Heart right ventricle (tissue), 16 donors: ENCODE measurements at regions of chr6 and their contacts with region 1.

Region 1: DNA sequence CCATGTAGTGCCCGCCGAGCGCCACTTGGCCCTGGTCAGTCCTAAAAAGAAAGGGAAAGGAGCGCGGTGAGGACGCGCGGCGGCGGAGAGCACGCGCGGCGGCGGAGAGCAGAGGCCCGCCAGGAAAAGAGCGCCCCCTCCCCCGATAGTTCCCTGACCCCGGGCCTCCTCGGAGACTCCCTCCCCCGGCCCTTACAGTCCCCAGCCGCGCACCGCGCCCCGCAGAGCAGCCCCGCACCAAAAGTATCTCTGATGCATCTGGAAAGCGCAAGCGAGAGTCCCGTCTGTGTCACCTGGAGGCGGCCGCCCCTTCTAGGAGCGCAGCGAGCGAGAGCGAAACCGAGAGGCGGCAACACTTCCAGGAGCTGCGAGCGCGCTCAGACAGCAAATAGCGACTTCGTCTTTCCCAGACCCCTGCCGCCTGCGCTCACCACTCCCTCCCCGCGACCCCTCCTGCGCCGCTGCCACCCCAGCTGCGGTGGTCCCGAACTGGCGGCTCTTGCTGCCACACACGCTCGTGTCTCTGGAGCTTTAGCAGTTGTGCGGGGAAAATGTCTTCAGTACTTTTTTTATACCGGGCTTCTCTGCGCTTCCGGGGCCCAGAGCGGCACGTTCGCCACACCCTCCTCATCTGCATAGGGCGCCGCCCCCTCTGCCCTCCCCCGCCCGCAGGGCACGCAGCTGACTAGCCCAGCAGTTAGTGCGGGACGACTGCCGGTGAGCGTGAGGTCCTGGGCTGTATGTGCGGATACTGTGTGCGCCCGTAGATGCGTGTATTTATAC is at the start of gene TENT5A:
- DNase-seq: peak; percentile 91 to 93
- ATAC-seq: peak; percentile 84 to 93 (median 88)
- H3K4me3 ChIP-seq: peak within 1 kb of the TSS; percentile 73 to 96 (median 82)
- H3K27ac ChIP-seq: peak within 1 kb of the TSS; percentile 87 to 99 (median 96)
- H3K4me1 ChIP-seq: peaks cover 1 to 45% (median 20%) of the 10 kb centered on the region in 9 donors
- H3K27me3 ChIP-seq: no peaks in the 10 kb centered on the region
- CTCF ChIP-seq: peak in 4 of 9 donors; percentile 13 to 33 (median 28)
- total RNA-seq, gene TENT5A: 37.0 to 72.1 (median 46.9) TPM

Region 2: GRCh38 chr6:80214436-80215022 is 1537.8 kb before region 1 on chr6:
- intact Hi-C with region 1: loop called in 2 of 10 experiments (anchors 10 kb)
- DNase-seq: peak in 1 of 2 donors; percentile 37
- ATAC-seq: peak; percentile 69 to 85 (median 77)
- H3K4me3 ChIP-seq: no peak overlapping the region
- H3K27ac ChIP-seq: peak overlapping the region in 1 of 10 donors; percentile 22
- H3K4me1 ChIP-seq: peaks cover 0 to 19% (median 11%) of the 10 kb centered on the region in 9 donors
- H3K27me3 ChIP-seq: no peaks in the 10 kb centered on the region
- CTCF ChIP-seq: peak; percentile 43 to 85 (median 72)

Region 3: GRCh38 chr6:81241126-81242041 is 510.9 kb before region 1 on chr6:
- intact Hi-C with region 1: loop called in 6 of 10 experiments (anchors 5 to 10 kb)
- DNase-seq: no peak
- ATAC-seq: no peak
- H3K4me3 ChIP-seq: no peak overlapping the region
- H3K27ac ChIP-seq: no peak overlapping the region
- H3K4me1 ChIP-seq: no peaks in the 10 kb centered on the region
- H3K27me3 ChIP-seq: no peaks in the 10 kb centered on the region
- CTCF ChIP-seq: peak in 8 of 9 donors; percentile 13 to 65 (median 48)

Region 4: GRCh38 chr6:81562169-81562568 is 190.2 kb before region 1 on chr6:
- intact Hi-C with region 1: no loop called
- DNase-seq: no peak
- ATAC-seq: peak in 6 of 8 donors; percentile 58 to 83 (median 66)
- H3K4me3 ChIP-seq: peak overlapping the region in 4 of 10 donors; percentile 10 to 23 (median 15)
- H3K27ac ChIP-seq: peak overlapping the region in 5 of 10 donors; percentile 16 to 57 (median 33)
- H3K4me1 ChIP-seq: peaks cover 0 to 19% (median 9%) of the 10 kb centered on the region in 9 donors
- H3K27me3 ChIP-seq: no peaks in the 10 kb centered on the region
- CTCF ChIP-seq: no peak

Region 5: GRCh38 chr6:81614292-81614691 is 138.0 kb before region 1 on chr6:
- intact Hi-C with region 1: loop called in 1 of 10 experiments (anchors 5 kb)
- DNase-seq: peak in 1 of 2 donors; percentile 9
- ATAC-seq: peak in 5 of 8 donors; percentile 35 to 89 (median 74)
- H3K4me3 ChIP-seq: no peak overlapping the region
- H3K27ac ChIP-seq: peak overlapping the region in 6 of 10 donors; percentile 31 to 77 (median 53)
- H3K4me1 ChIP-seq: peaks cover 0 to 17% (median 9%) of the 10 kb centered on the region in 9 donors
- H3K27me3 ChIP-seq: no peaks in the 10 kb centered on the region
- CTCF ChIP-seq: no peak

Region 6: DNA sequence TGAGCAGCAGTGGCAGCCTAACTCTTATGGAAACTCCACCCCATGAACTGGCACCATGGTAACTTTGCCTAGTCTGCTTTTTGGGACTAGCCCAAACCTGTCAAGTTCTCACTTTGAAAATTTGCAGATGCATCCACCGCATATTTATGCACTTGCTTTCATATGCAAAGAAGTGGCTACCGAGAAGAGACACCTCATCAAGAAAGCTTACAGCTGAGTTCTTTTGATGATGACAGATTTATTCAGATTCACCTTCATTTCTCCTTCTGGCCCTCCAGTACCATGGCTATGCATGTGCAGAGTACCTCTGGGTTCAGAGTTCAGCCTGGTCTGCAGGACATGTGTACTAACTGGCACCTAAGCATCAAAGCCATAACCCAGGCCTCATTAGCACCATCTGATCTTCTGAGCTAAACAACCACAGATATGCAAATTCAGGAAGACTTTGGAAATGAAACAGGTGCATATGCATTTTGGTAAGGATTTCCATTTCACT is 154.4 kb after region 1 on chr6:
- intact Hi-C with region 1: loop called in 4 of 10 experiments (anchors 2 to 10 kb)
- DNase-seq: peak in 1 of 2 donors; percentile 37
- ATAC-seq: peak in 7 of 8 donors; percentile 49 to 76 (median 71)
- H3K4me3 ChIP-seq: no peak overlapping the region
- H3K27ac ChIP-seq: peak overlapping the region in 8 of 10 donors; percentile 4 to 71 (median 50)
- H3K4me1 ChIP-seq: peaks cover 0 to 32% (median 7%) of the 10 kb centered on the region in 9 donors
- H3K27me3 ChIP-seq: no peaks in the 10 kb centered on the region
- CTCF ChIP-seq: no peak

Region 7: DNA sequence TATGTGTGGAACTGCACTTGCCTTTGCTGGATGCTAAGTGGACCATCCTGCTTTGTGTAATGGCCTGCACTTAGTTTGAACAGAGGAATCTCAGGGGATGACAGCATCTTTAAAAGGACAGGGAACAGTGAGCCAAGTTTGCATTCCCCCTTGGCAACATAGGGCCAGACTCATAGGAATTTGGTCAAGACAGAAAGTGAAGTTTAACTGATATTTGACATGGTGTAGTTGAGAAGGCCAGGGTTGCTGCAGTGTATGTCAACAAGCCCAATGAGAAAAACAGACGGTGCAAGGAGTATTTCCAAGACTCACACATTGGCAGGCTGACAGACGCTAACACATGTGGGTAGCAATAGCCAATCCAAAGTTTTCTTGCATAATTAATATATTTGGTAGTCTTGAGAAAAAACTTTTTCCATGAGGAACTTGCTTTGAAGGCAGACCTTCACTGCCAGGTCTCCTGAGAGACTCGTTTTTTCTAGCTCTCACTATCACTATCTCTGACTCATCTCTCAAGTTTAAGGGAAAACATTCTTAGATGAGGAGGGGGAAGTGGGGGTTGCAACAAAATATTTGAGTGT is 281.4 kb after region 1 on chr6:
- intact Hi-C with region 1: loop called in 3 of 10 experiments (anchors 10 kb)
- DNase-seq: peak; percentile 17 to 82
- ATAC-seq: peak; percentile 75 to 93 (median 89)
- H3K4me3 ChIP-seq: no peak overlapping the region
- H3K27ac ChIP-seq: peak overlapping the region in 7 of 10 donors; percentile 10 to 57 (median 45)
- H3K4me1 ChIP-seq: peaks cover 0 to 25% (median 15%) of the 10 kb centered on the region in 9 donors
- H3K27me3 ChIP-seq: no peaks in the 10 kb centered on the region
- CTCF ChIP-seq: no peak

Region 8: GRCh38 chr6:82178077-82178758 is 425.9 kb after region 1 on chr6:
- intact Hi-C with region 1: loop called in 5 of 10 experiments (anchors 5 to 10 kb)
- DNase-seq: no peak
- ATAC-seq: peak in 6 of 8 donors; percentile 63 to 84 (median 80)
- H3K4me3 ChIP-seq: no peak overlapping the region
- H3K27ac ChIP-seq: peak overlapping the region in 3 of 10 donors; percentile 1 to 42 (median 16)
- H3K4me1 ChIP-seq: peaks cover 0 to 21% (median 7%) of the 10 kb centered on the region in 9 donors
- H3K27me3 ChIP-seq: no peaks in the 10 kb centered on the region
- CTCF ChIP-seq: peak; percentile 47 to 75 (median 64)